A673 (cell line): ENCODE measurements at regions of chr11 and their contacts with region 1.

Region 1: DNA sequence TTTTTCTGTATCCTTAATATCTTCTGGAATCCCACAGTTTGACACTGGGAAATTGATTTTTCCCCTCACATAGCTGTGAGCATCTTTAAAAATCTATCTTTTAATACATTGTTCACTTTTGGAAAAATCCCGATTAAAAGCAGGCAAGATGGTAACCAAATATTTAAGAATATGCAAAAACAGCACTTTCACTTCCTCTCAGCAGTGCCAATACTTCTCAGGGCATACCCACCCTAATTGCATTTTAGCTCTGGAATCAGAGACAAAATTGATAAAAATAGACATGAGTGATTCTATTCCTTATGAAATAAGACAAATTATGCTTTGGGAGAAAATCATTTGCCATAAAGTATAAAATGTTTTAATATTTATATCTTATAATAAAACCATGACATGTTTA is 168.5 kb upstream of the CCDC90B start:
- DNase-seq: no peak
- H3K4me3 ChIP-seq: no peak overlapping the region
- H3K27ac ChIP-seq: no peak overlapping the region
- H3K4me1 ChIP-seq: peaks cover 3% of the 10 kb centered on the region
- H3K27me3 ChIP-seq: no peaks in the 10 kb centered on the region
- CTCF ChIP-seq: no peak

Region 2: GRCh38 chr11:83025267-83025720 is 429.4 kb before region 1 on chr11:
- CTCF ChIA-PET with region 1: no interaction called
- POLR2A ChIA-PET with region 1: no interaction called
- intact Hi-C with region 1: no loop called
- DNase-seq: no peak
- H3K4me3 ChIP-seq: no peak overlapping the region
- H3K27ac ChIP-seq: no peak overlapping the region
- H3K4me1 ChIP-seq: no peaks in the 10 kb centered on the region
- H3K27me3 ChIP-seq: no peaks in the 10 kb centered on the region
- CTCF ChIP-seq: no peak

Region 3: GRCh38 chr11:83310718-83311117 is 144.0 kb before region 1 on chr11:
- CTCF ChIA-PET with region 1: no interaction called
- POLR2A ChIA-PET with region 1: no interaction called
- intact Hi-C with region 1: loop called (anchors 5 kb)
- DNase-seq: peak; percentile 26
- H3K4me3 ChIP-seq: no peak overlapping the region
- H3K27ac ChIP-seq: no peak overlapping the region
- H3K4me1 ChIP-seq: peaks cover 7% of the 10 kb centered on the region
- H3K27me3 ChIP-seq: no peaks in the 10 kb centered on the region
- CTCF ChIP-seq: 0 out of 2 replicates have a peak, but pooled peaks have one; percentile 24